Sigmoid colon (tissue), 7 donors: ENCODE measurements at regions of chr11 and their contacts with region 1.

Region 1: GRCh38 chr11:130666781-130667251 is 218.4 kb downstream of the ADAMTS15 start:
- DNase-seq: no peak
- H3K4me3 ChIP-seq: no peak overlapping the region
- H3K27ac ChIP-seq: no peak overlapping the region
- H3K4me1 ChIP-seq: peaks cover 0 to 21% (median 17%) of the 10 kb centered on the region in 4 donors
- H3K27me3 ChIP-seq: no peaks in the 10 kb centered on the region
- CTCF ChIP-seq: no peak
- EP300 ChIP-seq: no peak
- POLR2A ChIP-seq: no peak

Region 2: DNA sequence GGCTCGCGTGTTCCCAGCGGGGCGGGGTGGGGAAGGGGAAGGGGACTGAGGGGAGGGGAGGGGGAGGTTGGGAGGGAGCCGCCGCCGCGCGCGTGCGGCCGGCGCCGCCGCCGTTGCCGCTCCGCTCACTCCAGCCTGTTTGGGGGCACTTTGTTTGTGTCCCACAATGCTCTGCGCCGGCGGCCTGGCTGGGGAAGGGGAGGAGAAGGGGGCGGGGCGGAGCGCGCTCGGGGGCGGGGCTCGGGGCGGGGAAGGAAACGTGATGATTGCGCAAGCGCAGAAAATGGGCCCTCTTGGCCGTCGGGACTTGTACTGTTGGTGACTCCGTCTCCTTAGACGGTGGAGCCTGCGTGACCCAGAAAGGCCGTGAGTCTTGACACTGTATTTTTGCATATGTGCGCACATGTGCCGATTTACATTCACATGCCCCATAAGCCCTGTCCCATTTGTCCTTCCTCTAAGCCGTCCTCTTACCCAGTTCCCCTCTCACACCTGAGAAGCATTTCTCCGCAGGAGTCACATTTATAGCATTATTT is 352.0 kb before region 1 on chr11 and contains the start of gene ZBTB44:
- intact Hi-C with region 1: loop called (anchors 10 kb)
- DNase-seq: peak; percentile 96
- H3K4me3 ChIP-seq: peak within 1 kb of the TSS; percentile 67 to 92 (median 72)
- H3K27ac ChIP-seq: peak within 1 kb of the TSS; percentile 86 to 96 (median 93)
- H3K4me1 ChIP-seq: peaks cover 0 to 42% (median 35%) of the 10 kb centered on the region in 4 donors
- H3K27me3 ChIP-seq: no peaks in the 10 kb centered on the region
- CTCF ChIP-seq: no peak
- EP300 ChIP-seq: no peak
- POLR2A ChIP-seq: peak; percentile 10 to 25
- total RNA-seq, gene ZBTB44: 73.0 to 162 (median 117) TPM

Region 3: GRCh38 chr11:130413405-130414106 is 253.3 kb before region 1 on chr11:
- intact Hi-C with region 1: no loop called
- DNase-seq: no peak
- H3K4me3 ChIP-seq: no peak overlapping the region
- H3K27ac ChIP-seq: peak overlapping the region; percentile 61 to 78 (median 70)
- H3K4me1 ChIP-seq: peaks cover 0 to 45% (median 40%) of the 10 kb centered on the region in 4 donors
- H3K27me3 ChIP-seq: no peaks in the 10 kb centered on the region
- CTCF ChIP-seq: no peak
- EP300 ChIP-seq: no peak
- POLR2A ChIP-seq: no peak